ENCODE measurements at regions of chr17 and their contacts with region 1.

Region 1: GRCh38 chr17:63741221-63742049 is at the start of gene STRADA:
- DNase-seq: peak; percentile 99
- H3K4me3 Mint-ChIP-seq: peak within 1 kb of the TSS; percentile 89
- H3K27ac Mint-ChIP-seq: peak within 1 kb of the TSS; percentile 87
- H3K4me1 Mint-ChIP-seq: no peaks in the 10 kb centered on the region
- H3K27me3 Mint-ChIP-seq: no peaks in the 10 kb centered on the region
- CTCF ChIP-seq: no peak
- total RNA-seq, gene STRADA: 36.5 and 36.6 TPM in 2 replicates

Region 2: GRCh38 chr17:63621766-63622519 is 119.5 kb before region 1 on chr17 and contains the start of gene MAP3K3:
- CTCF ChIA-PET with region 1: no interaction called
- POLR2A ChIA-PET with region 1: interaction called, 13 read pairs
- intact Hi-C with region 1: loop called (anchors 2 kb)
- DNase-seq: peak; percentile 100
- H3K4me3 Mint-ChIP-seq: peak within 1 kb of the TSS; percentile 93
- H3K27ac Mint-ChIP-seq: no peak within 1 kb of the TSS
- H3K4me1 Mint-ChIP-seq: peaks cover 20% of the 10 kb centered on the region
- H3K27me3 Mint-ChIP-seq: no peaks in the 10 kb centered on the region
- CTCF ChIP-seq: no peak
- total RNA-seq, gene MAP3K3: 12.8 and 13.8 TPM in 2 replicates

Region 3: DNA sequence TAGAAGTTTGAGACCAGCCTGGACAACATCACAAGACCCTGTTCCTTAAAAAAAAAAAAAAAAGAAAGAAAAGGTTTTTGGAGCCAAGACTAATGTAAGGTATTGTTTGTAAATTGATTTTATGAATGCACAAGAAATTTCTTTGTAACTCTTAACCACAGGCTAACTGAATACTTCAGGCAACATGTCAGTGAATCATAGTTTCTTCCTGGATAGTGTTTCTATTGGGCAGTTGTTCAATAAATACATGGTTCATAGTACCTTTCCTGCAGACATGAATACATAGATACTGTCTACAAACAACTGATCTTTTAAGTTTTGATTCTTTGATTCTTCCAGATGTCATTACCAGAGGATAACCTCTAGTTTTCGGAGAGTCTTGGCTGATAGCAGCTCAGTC is 44.1 kb after region 1 on chr17:
- CTCF ChIA-PET with region 1: interaction called, 5 read pairs
- POLR2A ChIA-PET with region 1: interaction called, 10 read pairs
- intact Hi-C with region 1: no loop called
- DNase-seq: peak; percentile 42
- H3K4me3 Mint-ChIP-seq: no peak overlapping the region
- H3K27ac Mint-ChIP-seq: peak overlapping the region; percentile 42
- H3K4me1 Mint-ChIP-seq: peaks cover 31% of the 10 kb centered on the region
- H3K27me3 Mint-ChIP-seq: no peaks in the 10 kb centered on the region
- CTCF ChIP-seq: no peak

Region 4: DNA sequence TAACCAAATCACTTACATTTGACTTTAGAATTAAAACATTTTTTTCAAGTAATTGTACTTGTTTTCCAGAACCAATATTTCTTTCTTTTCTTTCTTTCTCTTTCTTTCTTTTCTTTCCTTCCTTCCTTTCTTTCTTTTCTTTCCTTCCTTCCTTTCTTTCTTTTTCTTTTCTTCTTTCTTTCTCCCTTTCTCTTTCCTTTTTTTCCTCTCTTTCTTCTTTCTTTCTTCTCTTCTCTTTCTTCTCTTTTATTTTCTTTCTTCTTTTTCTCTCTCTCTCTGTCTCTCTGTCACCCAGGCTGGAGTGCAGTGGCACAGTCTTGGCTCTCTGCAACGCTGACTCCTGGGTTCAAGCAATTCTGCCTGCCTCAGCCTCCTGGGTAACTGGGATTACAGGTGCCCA is 59.4 kb after region 1 on chr17:
- CTCF ChIA-PET with region 1: no interaction called
- POLR2A ChIA-PET with region 1: no interaction called
- intact Hi-C with region 1: no loop called
- DNase-seq: no peak
- H3K4me3 Mint-ChIP-seq: no peak overlapping the region
- H3K27ac Mint-ChIP-seq: no peak overlapping the region
- H3K4me1 Mint-ChIP-seq: no peaks in the 10 kb centered on the region
- H3K27me3 Mint-ChIP-seq: no peaks in the 10 kb centered on the region
- CTCF ChIP-seq: no peak

Region 5: DNA sequence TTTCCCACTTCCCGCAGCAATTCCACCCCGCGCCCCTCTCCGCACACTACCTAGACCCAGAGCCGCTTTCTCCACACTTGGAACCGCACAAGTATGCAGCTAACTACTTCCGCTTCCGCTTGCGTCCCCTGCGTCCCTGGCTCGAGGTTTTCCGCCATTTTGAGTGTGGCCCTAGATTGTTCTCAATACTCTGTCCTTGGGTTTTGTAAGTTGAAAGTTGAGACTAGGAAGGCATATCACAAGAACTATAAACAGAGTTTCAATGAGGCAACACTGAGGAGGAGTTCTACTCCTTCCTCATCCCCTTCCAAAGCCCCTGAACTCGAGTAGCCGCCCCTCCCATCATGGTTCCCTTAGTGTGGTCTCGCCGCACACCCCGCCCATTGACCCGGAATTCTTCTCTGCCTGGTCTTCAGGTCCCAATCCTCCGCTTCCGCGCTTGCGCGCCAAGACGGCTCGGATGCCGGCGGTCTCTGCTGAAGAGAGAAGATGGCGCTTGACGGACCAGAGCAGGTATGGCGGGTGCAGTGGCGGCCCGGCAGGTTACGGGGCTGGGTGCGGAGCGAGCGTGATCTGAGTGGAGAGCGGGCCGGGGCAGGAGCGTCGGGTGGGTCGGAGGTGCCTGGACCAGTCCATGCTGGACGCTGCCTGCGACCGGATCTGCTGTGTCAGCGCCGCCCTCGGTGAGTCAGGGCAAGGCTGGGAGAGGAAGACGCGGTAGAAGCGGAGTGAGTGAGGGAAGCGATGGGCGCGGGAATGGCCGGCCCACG is 85.8 kb after region 1 on chr17 and contains the starts of genes FTSJ3 and PSMC5:
- CTCF ChIA-PET with region 1: interaction called, 3 read pairs
- POLR2A ChIA-PET with region 1: interaction called, 15 read pairs
- intact Hi-C with region 1: no loop called
- DNase-seq: peak; percentile 96
- H3K4me3 Mint-ChIP-seq: peak within 1 kb of the TSS; percentile 100
- H3K27ac Mint-ChIP-seq: peak within 1 kb of the TSS; percentile 100
- H3K4me1 Mint-ChIP-seq: peaks cover 27% of the 10 kb centered on the region
- H3K27me3 Mint-ChIP-seq: no peaks in the 10 kb centered on the region
- CTCF ChIP-seq: peak; percentile 26
- total RNA-seq, gene FTSJ3: 36.7 and 49.5 TPM in 2 replicates
- total RNA-seq, gene PSMC5: 148 and 151 TPM in 2 replicates

Region 6: GRCh38 chr17:63842540-63843386 is 101.3 kb after region 1 on chr17 and contains the start of gene SMARCD2:
- CTCF ChIA-PET with region 1: no interaction called
- POLR2A ChIA-PET with region 1: interaction called, 23 read pairs
- intact Hi-C with region 1: no loop called
- DNase-seq: peak; percentile 98
- H3K4me3 Mint-ChIP-seq: peak within 1 kb of the TSS; percentile 93
- H3K27ac Mint-ChIP-seq: peak within 1 kb of the TSS; percentile 90
- H3K4me1 Mint-ChIP-seq: peaks cover 36% of the 10 kb centered on the region
- H3K27me3 Mint-ChIP-seq: no peaks in the 10 kb centered on the region
- CTCF ChIP-seq: no peak
- total RNA-seq, gene SMARCD2: 43.7 and 54.6 TPM in 2 replicates

Measured in MCF 10A (cell line).